HCT116 (cell line): ENCODE measurements at regions of chr18 and their contacts with region 1.

Region 1: DNA sequence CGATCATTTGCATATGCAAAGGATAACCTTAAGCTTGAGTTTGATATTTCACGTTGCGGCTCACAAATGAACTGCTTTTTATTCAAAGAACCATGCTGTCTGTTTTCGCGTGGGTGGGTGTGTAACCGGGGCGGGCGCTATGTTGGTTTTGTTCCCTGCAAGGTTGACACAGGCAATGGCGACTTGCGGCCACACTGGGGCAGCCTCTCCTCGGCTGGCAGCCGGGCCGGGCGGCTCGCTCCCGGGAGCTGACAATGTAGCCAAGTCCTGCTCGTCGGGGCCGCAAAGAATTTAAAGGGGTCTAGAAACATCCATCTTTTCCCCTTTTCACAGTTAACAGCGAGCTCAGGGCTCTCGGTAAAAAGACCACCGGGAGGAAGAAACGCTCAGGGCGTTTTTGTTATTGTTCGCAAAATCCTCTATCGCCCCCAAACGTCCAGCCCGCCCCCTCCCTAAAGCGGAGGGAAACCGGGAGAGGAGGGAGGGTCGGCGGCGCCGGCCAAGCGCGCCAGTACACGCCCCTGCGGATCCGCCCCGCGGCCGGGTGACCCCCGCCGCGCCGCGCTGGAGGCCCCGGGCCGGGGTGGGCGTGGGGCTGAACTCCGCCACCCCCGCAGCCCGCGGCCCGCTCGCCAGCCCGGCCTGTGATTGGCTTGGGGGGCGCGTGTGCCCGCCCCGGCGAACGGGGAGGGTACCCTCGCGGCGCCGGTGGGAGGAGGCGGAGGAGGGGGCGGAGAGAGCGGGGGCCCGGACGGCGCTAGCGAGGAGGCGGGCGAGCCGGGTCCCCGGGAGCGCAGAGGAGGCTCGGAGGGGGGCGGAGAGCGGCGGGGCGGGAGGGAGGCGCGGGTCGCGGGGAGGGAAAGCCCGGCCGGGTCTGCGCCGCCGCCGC is at the start of gene NEDD4L:
- DNase-seq: peak; percentile 68
- ATAC-seq: peak; percentile 81
- H3K4me3 ChIP-seq: peak within 1 kb of the TSS; percentile 80 to 81
- H3K27ac ChIP-seq: peak within 1 kb of the TSS; percentile 82
- H3K4me1 ChIP-seq: peaks cover 11 to 21% of the 10 kb centered on the region in 2 experiments; a peak in 3 of 4 replicates
- H3K27me3 ChIP-seq: no peaks in the 10 kb centered on the region
- CTCF ChIP-seq: peak; percentile 80 to 85 (median 85)
- POLR2A ChIP-seq: no peak
- RAD21 ChIP-seq: peak; percentile 93
- total RNA-seq, gene NEDD4L: 41.5 TPM

Region 2: DNA sequence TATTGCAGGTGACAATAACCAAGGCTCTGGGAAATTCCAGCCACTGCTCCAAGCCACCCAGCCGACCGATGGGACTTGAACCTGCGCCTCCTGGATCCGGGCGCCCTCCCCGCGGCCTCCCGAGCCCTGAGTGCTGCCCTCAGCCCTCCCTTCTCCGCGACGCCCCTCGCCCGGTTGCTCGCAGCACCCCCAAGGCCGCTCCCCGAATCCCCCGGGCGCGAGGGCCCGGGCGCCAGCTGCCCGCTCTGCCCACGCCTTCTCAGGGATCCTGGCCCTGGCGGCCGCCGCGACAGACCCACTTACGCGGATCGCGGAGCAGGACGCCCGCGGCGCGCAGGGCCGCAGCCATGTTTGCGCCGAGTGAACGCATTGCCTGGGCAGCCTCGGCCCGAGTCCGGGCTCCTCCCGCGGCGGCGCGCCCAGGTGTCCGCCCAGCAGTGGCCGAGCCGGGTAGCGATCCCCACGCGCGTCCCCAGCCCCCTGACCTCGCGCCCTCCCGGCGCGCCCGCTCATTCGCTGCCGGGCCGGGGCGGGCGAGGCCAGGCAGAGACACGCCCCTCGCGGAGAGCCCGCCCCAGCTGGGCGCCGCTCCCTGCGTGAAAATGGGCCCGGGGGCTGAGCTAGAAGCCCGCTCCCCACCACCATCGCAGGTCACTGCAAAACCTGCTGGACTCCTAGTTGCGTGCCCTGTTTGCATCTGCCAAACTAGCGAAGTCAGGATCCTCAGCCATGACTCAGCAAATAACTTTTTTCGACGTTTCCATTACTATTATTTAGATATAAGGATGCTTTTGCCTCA is 457.3 kb before region 1 on chr18 and contains the start of gene FECH:
- CTCF ChIA-PET with region 1: no interaction called
- POLR2A ChIA-PET with region 1: no interaction called
- RAD21 ChIA-PET with region 1: no interaction called
- intact Hi-C with region 1: no loop called
- DNase-seq: peak; percentile 12
- ATAC-seq: peak; percentile 92
- H3K4me3 ChIP-seq: peak within 1 kb of the TSS; percentile 59 to 86
- H3K27ac ChIP-seq: peak within 1 kb of the TSS; percentile 89
- H3K4me1 ChIP-seq: peaks cover 4 to 27% of the 10 kb centered on the region in 2 experiments; a peak in 3 of 4 replicates
- H3K27me3 ChIP-seq: no peaks in the 10 kb centered on the region
- CTCF ChIP-seq: no peak
- POLR2A ChIP-seq: peak; percentile 62
- RAD21 ChIP-seq: no peak
- total RNA-seq, gene FECH: 42.7 TPM

Region 3: GRCh38 chr18:57630002-57630753 is 413.6 kb before region 1 on chr18:
- CTCF ChIA-PET with region 1: no interaction called
- POLR2A ChIA-PET with region 1: no interaction called
- RAD21 ChIA-PET with region 1: no interaction called
- intact Hi-C with region 1: loop called (anchors 5 kb)
- DNase-seq: peak; percentile 89
- ATAC-seq: peak; percentile 94
- H3K4me3 ChIP-seq: peak overlapping the region; percentile 80 to 83
- H3K27ac ChIP-seq: peak overlapping the region; percentile 65
- H3K4me1 ChIP-seq: peaks cover 0 to 20% of the 10 kb centered on the region in 2 experiments; a peak in 2 of 4 replicates
- H3K27me3 ChIP-seq: no peaks in the 10 kb centered on the region
- CTCF ChIP-seq: peak in 2 of 3 experiments; percentile 64 to 74; a peak in 4 of 6 replicates
- POLR2A ChIP-seq: peak; percentile 63
- RAD21 ChIP-seq: no peak

Region 4: DNA sequence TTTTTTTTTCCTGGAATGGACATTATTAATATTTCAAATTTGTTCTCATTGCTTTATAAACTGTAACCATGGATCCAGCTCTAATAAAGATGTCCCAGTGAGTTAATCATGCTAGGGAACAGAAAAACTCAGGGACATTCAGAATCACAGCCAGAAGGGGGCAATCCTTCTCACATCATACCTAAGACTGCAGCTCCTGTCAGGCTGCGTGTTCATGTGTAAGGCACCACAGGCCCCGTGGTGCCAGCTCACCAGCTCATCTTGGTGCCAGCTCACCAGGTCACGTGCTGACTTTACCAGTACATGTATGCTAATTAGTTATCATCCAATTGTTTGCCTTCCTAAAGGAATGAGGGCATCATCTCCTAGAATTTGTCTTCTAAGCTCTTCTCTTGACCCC is 84.5 kb before region 1 on chr18:
- CTCF ChIA-PET with region 1: interaction called, 5 read pairs
- POLR2A ChIA-PET with region 1: no interaction called
- RAD21 ChIA-PET with region 1: interaction called in 1 of 2 experiments, 3 read pairs
- intact Hi-C with region 1: loop called (anchors 5 kb)
- DNase-seq: peak; percentile 72
- ATAC-seq: peak; percentile 99
- H3K4me3 ChIP-seq: no peak overlapping the region
- H3K27ac ChIP-seq: no peak overlapping the region
- H3K4me1 ChIP-seq: no peaks in the 10 kb centered on the region
- H3K27me3 ChIP-seq: peaks cover 3% of the 10 kb centered on the region; the same call in 1 of the 2 replicates
- CTCF ChIP-seq: peak; percentile 52 to 64 (median 58); a peak in 5 of 6 replicates
- POLR2A ChIP-seq: no peak
- RAD21 ChIP-seq: peak; percentile 69

Region 5: DNA sequence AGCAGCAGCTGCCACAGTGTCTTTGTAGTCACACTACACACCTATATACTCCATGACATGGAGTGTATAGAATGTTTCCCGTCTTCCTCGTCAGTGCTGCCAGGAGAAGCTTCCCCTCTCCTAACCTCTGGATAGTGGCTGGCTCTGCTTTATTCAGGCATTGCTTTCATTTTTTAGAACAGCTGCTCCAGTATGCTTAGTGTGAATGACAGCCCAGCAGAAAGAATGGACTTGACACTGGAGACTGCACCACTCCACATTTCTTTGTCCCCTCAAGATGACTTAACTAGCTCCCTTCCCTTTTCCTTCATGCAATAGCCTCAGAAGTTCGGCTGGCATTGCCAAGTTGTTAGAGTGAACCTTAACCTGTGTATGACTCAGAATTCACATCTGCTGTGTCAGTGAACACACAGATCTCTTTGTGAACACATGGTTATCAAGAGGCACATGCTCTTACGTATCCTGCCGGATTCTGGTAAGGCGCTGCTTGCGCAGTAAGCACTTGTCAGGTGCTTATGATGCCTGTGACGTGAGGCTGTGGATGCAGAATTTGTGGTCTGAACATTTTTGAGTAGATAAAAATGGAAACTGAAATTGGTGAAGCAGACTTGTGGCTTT is 74.2 kb after region 1 on chr18:
- CTCF ChIA-PET with region 1: interaction called, 43 read pairs
- POLR2A ChIA-PET with region 1: interaction called, 3 read pairs
- RAD21 ChIA-PET with region 1: interaction called, 5 to 8 read pairs
- intact Hi-C with region 1: loop called (anchors 1 kb)
- DNase-seq: peak; percentile 34
- ATAC-seq: peak; percentile 57
- H3K4me3 ChIP-seq: no peak overlapping the region
- H3K27ac ChIP-seq: no peak overlapping the region
- H3K4me1 ChIP-seq: peaks cover 12 to 16% of the 10 kb centered on the region in 2 experiments
- H3K27me3 ChIP-seq: no peaks in the 10 kb centered on the region
- CTCF ChIP-seq: no peak
- POLR2A ChIP-seq: no peak
- RAD21 ChIP-seq: no peak

Region 6: GRCh38 chr18:58135701-58136331 is 92.1 kb after region 1 on chr18:
- CTCF ChIA-PET with region 1: interaction called, 7 read pairs
- POLR2A ChIA-PET with region 1: no interaction called
- RAD21 ChIA-PET with region 1: no interaction called
- intact Hi-C with region 1: loop called (anchors 5 kb)
- DNase-seq: peak; percentile 67
- ATAC-seq: peak; percentile 97
- H3K4me3 ChIP-seq: no peak overlapping the region
- H3K27ac ChIP-seq: no peak overlapping the region
- H3K4me1 ChIP-seq: peaks cover 0 to 5% of the 10 kb centered on the region in 2 experiments; a peak in 2 of 4 replicates
- H3K27me3 ChIP-seq: no peaks in the 10 kb centered on the region
- CTCF ChIP-seq: peak; percentile 78 to 97 (median 91); a peak in 5 of 6 replicates
- POLR2A ChIP-seq: no peak
- RAD21 ChIP-seq: peak; percentile 75

Region 7: DNA sequence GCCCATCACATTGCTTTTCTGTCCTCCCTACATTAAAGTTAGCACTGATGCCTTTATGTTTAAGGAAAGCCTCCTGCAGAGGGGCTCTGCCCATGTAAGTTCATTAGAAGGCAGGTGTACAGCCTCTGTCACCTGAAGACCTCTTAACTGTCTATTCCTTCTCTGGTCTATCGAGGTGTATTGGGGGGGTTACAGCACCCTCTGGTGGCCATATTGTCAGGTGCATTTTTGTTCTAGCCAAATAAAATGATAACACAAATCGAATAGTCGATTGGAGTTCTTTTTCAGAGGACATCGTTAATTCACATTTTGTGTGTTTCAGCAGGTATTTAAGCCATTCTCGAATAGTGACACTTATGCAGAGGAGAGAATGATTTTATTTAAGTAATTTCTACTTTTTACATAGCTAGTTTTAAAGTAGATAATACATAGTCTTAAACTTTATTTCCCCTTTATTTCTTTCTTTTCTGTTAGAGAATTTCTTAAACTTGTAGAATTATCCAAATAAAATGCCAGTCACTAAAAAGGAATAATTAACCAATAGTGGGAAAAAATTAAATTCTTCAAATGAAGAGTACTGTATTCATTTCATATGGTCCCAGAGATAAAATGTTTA is 137.1 kb after region 1 on chr18:
- CTCF ChIA-PET with region 1: interaction called, 4 read pairs
- POLR2A ChIA-PET with region 1: interaction called, 3 read pairs
- RAD21 ChIA-PET with region 1: no interaction called
- intact Hi-C with region 1: loop called (anchors 1 kb)
- DNase-seq: no peak
- ATAC-seq: peak; percentile 59
- H3K4me3 ChIP-seq: no peak overlapping the region
- H3K27ac ChIP-seq: no peak overlapping the region
- H3K4me1 ChIP-seq: peaks cover 22 to 31% of the 10 kb centered on the region in 2 experiments
- H3K27me3 ChIP-seq: no peaks in the 10 kb centered on the region
- CTCF ChIP-seq: peak; percentile 78 to 96 (median 83)
- POLR2A ChIP-seq: no peak
- RAD21 ChIP-seq: peak; percentile 84

Region 8: GRCh38 chr18:58321986-58322385 is 278.3 kb after region 1 on chr18:
- CTCF ChIA-PET with region 1: no interaction called
- POLR2A ChIA-PET with region 1: no interaction called
- RAD21 ChIA-PET with region 1: no interaction called
- intact Hi-C with region 1: loop called (anchors 5 kb)
- DNase-seq: peak; percentile 74
- ATAC-seq: peak; percentile 97
- H3K4me3 ChIP-seq: no peak overlapping the region
- H3K27ac ChIP-seq: no peak overlapping the region
- H3K4me1 ChIP-seq: peaks cover 13 to 30% of the 10 kb centered on the region in 2 experiments
- H3K27me3 ChIP-seq: no peaks in the 10 kb centered on the region
- CTCF ChIP-seq: peak; percentile 56 to 73 (median 62)
- POLR2A ChIP-seq: no peak
- RAD21 ChIP-seq: peak; percentile 94